Right ventricle myocardium inferior (tissue), 1 donor: ENCODE measurements at regions of chr5 and their contacts with region 1.

Region 1: DNA sequence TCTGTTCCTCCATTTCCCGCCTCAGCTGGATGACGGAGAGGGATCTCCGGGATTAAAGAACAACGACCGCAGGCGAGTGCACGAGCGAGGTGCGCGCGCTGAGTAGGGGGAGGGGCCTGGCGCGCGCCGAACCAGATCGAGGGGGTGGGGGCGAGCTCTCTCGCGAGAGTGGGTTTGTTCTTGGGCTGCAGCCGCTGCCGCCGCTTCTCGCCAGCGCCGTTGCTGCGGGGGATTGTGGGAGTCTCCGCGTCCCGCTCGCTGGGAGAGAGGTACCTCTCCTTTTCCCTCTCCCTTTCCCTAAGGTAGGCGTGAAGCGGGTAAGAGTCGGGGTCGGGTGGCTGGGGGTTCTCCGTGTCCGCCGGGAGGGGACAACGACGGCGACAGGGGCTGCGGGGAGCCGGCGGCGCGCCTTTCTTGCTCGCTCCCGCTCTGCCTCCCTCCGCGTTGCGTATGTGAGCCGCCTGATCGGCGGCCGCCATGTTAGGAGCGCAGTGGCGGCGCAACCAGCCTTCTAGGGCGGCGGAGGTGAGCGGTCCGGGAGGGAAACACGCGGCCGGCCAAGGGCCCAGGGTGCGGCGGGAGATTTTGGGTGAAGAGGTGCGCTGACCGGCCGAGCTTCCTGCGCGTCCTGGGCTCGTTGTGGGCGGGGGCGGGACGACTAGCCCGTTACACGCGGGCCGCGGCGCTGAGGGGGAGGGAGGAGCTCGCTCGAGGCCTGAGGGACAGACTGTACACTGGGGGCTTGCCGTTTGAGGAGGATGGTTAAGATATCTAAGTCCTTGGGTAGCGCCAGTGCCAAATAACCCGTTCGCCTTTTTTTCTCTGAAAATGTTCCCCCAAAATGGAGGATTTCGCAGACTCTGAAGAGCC is at the start of gene MATR3:
- DNase-seq: peak; percentile 97
- ATAC-seq: peak; percentile 96
- total RNA-seq, gene MATR3: 120 TPM

Region 2: DNA sequence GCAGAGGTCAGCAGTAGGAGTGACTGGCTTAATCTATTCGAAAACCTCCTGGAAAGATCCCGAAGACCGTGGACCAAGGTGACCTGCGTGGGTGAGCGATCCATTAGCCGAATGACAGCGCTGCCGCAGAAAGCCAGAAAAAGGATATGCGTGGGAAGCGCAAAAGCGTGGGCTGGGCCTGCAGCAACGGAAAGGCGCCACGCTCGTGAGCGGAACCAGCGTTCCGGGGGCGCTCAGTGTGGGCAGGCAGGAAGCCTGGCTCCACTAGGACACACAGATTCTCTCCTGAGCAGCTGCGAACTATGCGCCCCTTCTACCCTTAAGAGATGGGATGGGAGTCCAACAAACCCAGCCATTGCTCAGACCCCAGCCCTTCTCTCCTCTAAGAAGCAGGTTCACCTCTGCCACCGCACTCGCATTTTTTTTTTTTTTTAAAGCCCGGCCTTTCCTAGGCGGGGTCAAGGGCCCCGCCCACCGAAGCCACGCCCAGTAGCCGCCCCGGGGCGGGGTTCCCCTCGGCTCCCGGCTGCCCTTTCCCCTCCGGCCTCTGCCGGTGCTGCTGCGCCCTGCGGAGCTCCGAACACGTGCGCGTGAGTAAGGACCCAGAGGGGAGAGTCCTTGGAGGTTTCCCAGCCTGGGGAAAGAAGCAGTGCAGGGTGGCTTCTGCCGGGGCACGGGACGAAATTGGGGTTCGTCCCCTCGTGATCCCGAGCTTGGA is 20.0 kb before region 1 on chr5:
- intact Hi-C with region 1: loop called (anchors 1 kb)
- DNase-seq: peak; percentile 94
- ATAC-seq: peak; percentile 97

Region 3: DNA sequence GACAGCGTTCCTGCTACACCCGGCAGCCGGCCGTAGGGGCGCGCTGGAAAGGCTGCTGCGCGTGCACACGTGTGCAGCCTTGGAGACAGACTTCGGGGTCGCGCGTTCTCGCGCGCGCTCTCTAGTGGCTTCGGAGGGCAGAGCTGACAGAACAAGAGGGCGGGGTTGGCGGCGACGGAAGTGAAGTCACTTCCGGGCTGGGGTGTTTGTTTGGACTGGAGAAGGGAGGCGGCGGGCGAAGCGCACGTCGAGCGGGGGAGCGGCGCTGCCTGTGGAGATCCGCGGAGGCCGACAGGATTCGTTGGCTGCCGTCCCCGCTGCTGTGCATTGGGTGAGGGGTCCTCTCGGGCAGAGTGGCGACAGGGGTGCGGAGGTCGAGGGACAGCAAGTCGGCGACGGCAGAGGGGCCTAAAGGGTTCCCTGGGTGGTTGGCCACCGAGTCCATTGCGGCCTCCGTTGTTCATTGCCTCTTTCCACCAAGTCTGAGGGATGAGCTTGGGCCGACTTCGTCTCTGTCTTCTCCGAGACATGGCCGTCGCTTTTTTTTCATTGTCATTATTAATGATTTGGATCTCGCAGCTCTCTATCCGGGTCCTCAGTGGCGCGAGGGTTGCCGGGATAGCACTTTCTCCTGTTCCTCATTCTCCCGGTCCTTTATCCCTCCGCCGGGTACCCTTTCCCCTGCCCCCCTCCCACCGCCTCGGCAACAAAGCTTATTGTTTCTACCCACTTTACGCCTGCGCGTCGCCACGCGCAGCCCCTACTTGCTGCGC is 48.1 kb after region 1 on chr5 and contains the start of gene PAIP2:
- intact Hi-C with region 1: loop called (anchors 2 kb)
- DNase-seq: peak; percentile 100
- ATAC-seq: peak; percentile 97
- total RNA-seq, gene PAIP2: 144 TPM